Esophagus squamous epithelium (tissue), 5 donors: ENCODE measurements at regions of chr12 and their contacts with region 1.

Region 1: GRCh38 chr12:50986966-50987737 is 34.8 kb downstream of the HIGD1C start:
- DNase-seq: no peak
- H3K4me3 ChIP-seq: no peak overlapping the region
- H3K27ac ChIP-seq: peak overlapping the region in 3 of 4 donors; percentile 40 to 79 (median 67)
- H3K4me1 ChIP-seq: peaks cover 11 to 34% (median 23%) of the 10 kb centered on the region in 3 donors
- H3K27me3 ChIP-seq: no peaks in the 10 kb centered on the region
- CTCF ChIP-seq: peak in 5 of 6 experiments; percentile 39 to 56 (median 47)
- POLR2A ChIP-seq: no peak

Region 2: GRCh38 chr12:50764286-50765094 is 222.7 kb before region 1 on chr12:
- intact Hi-C with region 1: loop called (anchors 5 kb)
- DNase-seq: no peak
- H3K4me3 ChIP-seq: peak overlapping the region; percentile 84 to 100 (median 90)
- H3K27ac ChIP-seq: peak overlapping the region; percentile 98 to 99 (median 98)
- H3K4me1 ChIP-seq: peaks cover 15 to 59% (median 19%) of the 10 kb centered on the region in 3 donors
- H3K27me3 ChIP-seq: no peaks in the 10 kb centered on the region
- CTCF ChIP-seq: no peak
- POLR2A ChIP-seq: no peak

Region 3: GRCh38 chr12:50825372-50825838 is 161.7 kb before region 1 on chr12:
- intact Hi-C with region 1: loop called (anchors 10 kb)
- DNase-seq: no peak
- H3K4me3 ChIP-seq: no peak overlapping the region
- H3K27ac ChIP-seq: peak overlapping the region in 3 of 4 donors; percentile 38 to 53 (median 49)
- H3K4me1 ChIP-seq: peaks cover 0 to 24% (median 6%) of the 10 kb centered on the region in 3 donors
- H3K27me3 ChIP-seq: no peaks in the 10 kb centered on the region
- CTCF ChIP-seq: peak; percentile 27 to 75 (median 62)
- POLR2A ChIP-seq: no peak

Region 4: GRCh38 chr12:50934981-50935807 is 52.0 kb before region 1 on chr12:
- intact Hi-C with region 1: loop called (anchors 10 kb)
- DNase-seq: no peak
- H3K4me3 ChIP-seq: peak overlapping the region in 1 of 4 donors; percentile 36
- H3K27ac ChIP-seq: peak overlapping the region; percentile 53 to 88 (median 82)
- H3K4me1 ChIP-seq: peaks cover 12 to 71% (median 35%) of the 10 kb centered on the region in 3 donors
- H3K27me3 ChIP-seq: no peaks in the 10 kb centered on the region
- CTCF ChIP-seq: no peak
- POLR2A ChIP-seq: no peak